ENCODE measurements at regions of chr10 and their contacts with region 1.

Region 1: DNA sequence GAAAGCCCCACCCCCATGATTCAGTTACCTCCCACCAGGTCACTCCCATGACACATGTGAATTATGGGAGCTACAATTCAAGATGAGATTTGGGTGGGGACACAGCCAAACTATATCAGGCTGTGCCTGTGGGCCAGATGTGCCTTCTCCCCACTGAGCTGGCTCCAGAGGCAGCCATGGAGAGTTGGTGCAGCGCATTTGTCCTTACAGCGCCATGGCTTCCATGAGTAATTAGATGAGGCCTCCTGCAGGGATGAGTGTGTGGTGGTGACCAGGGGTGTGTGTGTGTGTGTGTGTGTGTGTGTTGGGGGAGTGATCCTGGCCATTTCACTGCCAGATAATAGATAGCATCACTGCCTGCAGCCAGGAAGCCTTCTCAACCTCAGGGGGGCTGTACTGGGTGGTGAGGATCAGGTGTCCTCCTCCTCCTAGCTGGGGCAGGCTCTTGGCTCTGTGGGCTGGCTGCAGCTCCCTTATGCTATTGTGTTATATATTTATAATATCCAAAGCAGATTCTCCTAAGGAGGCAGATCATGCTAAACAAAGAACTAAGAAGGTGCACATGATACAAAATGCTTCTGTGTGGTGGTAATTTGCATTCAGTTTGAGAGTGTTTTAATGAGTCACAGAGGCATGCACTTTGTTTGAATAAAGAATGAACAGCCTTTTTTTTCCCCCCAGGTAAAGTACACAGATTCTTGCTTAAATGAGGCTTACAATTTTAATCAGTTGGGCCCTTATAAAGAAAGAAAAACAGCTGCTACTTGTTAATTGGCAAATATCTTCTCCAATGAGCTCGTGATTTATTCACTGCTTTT is 94.8 kb downstream of the FANK1 start:
- DNase-seq: no peak
- H3K4me3 ChIP-seq: no peak overlapping the region
- H3K27ac ChIP-seq: no peak overlapping the region
- H3K4me1 ChIP-seq: peaks cover 4% of the 10 kb centered on the region
- H3K27me3 ChIP-seq: no peaks in the 10 kb centered on the region
- CTCF ChIP-seq: no peak
- EP300 ChIP-seq: no peak
- POLR2A ChIP-seq: no peak

Region 2: DNA sequence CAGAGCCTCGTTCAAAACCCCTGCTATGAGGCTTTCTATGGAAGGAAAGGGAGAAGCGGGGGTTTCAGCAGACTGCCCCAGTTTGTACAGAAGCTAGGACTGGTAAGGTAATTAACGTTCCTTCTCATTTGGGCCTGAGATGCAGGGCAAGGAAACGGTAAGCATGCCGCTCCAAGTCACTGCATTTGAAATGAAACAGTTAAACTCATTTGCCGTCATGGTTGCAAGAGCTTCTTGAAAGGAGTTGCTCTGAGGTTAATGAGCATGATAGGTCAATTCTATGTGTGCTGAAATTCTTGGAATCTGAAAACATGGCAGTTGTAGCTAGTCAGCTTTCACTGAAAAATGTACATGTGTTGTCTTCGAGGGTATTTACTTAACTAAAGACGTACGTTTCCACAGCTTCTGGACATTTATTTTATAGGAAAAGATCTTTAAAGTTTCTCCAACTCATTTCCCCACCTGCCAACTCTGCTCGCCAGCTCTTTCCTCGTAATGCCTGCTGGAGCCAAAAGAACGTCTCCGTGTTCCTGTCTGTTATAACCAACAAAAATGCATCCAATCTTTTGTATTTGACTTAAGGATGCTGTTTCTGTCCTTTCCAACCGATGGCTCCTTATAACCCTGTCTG is 323.8 kb after region 1 on chr10:
- intact Hi-C with region 1: loop called in 1 of 4 experiments (anchors 5 kb)
- DNase-seq: no peak
- H3K4me3 ChIP-seq: no peak overlapping the region
- H3K27ac ChIP-seq: peak overlapping the region in 1 of 2 donors; percentile 38
- H3K4me1 ChIP-seq: peaks cover 7% of the 10 kb centered on the region
- H3K27me3 ChIP-seq: no peaks in the 10 kb centered on the region
- CTCF ChIP-seq: no peak
- EP300 ChIP-seq: no peak
- POLR2A ChIP-seq: no peak

Measured in ovary (tissue), 10 donors.